HEK293 (cell line): ENCODE measurements at regions of chr3 and their contacts with region 1.

Region 1: DNA sequence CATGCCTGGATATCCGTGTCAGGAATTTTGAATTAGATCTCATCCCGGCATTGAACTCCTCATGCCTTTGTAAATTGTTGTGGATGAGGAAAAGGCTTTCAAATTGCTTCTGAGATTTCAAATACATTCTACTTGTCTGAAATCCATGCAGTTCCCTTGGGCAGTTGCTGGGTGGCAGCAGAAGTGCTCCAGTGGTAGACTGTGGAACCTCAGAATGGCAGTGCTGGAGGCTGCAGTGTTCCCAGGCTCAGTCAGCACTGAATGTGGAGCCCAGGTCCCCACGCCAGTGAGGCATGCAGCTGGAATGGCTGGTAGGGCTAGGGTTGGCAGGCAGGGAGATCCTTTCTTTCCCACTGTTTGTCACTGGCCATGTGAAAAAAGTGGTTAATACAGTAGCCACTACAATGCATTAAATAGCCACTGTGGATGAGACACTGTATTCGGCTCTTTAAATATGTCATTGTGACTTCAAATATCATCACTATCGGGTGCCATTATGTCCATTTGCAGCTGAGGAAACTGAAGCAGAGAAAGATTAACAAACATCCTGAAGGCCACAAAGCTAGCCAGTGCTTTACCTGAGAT is 98.6 kb downstream of the TPRG1 start:
- H3K4me3 ChIP-seq: no peak overlapping the region
- H3K27ac ChIP-seq: no peak overlapping the region
- H3K4me1 ChIP-seq: no peaks in the 10 kb centered on the region
- CTCF ChIP-seq: peak; percentile 34; the same call in 1 of the 2 replicates

Region 2: DNA sequence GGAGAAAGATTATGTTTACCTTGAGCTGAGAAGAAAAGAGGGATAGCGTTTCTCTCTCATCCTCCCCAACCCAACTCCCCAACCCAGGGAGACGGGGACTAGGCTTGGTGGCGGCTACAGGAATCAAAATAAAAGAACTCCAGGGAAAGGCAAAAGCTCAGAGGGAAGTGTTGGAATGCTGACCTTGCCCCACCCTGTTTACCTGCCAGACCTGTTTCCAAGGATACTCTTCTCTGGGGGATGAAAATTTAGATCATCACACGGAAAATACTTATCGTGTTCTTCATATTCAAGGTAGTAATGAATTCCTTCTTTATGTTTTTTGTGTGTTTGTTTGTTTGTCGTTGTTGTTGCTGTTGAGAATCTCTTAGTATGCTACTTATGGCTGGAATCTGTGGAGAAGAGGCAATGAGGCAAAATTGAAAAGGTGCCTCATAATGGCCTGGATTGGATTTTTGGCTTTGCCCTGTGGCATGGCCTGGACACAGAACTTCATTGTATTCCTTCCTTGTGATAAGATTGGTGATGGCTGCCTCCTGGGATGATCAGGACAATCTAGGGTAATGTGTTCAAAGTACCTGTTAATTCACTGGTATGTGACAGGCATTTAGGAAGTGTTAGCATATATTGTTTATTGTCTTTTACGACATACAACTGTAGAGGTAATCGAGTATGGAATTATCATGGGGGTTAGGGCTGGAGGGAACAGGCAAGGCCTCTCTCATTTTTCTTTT is 109.6 kb before region 1 on chr3:
- CTCF ChIA-PET with region 1: no interaction called
- POLR2A ChIA-PET with region 1: no interaction called
- H3K4me3 ChIP-seq: no peak overlapping the region
- H3K27ac ChIP-seq: no peak overlapping the region
- H3K4me1 ChIP-seq: no peaks in the 10 kb centered on the region
- CTCF ChIP-seq: no peak

Region 3: GRCh38 chr3:189331002-189331418 is 60.7 kb after region 1 on chr3:
- CTCF ChIA-PET with region 1: interaction called, 14 read pairs
- POLR2A ChIA-PET with region 1: no interaction called
- H3K4me3 ChIP-seq: no peak overlapping the region
- H3K27ac ChIP-seq: no peak overlapping the region
- H3K4me1 ChIP-seq: no peaks in the 10 kb centered on the region
- CTCF ChIP-seq: no peak

Region 4: GRCh38 chr3:189947948-189948723 is 677.8 kb after region 1 on chr3:
- CTCF ChIA-PET with region 1: interaction called, 29 read pairs
- POLR2A ChIA-PET with region 1: no interaction called
- H3K4me3 ChIP-seq: no peak overlapping the region
- H3K27ac ChIP-seq: no peak overlapping the region
- H3K4me1 ChIP-seq: no peaks in the 10 kb centered on the region
- CTCF ChIP-seq: peak; percentile 24; the same call in 1 of the 2 replicates